Naive thymus-derived CD4-positive, alpha-beta T cell (primary cell): ENCODE measurements at regions of chr12 and their contacts with region 1.

Region 1: DNA sequence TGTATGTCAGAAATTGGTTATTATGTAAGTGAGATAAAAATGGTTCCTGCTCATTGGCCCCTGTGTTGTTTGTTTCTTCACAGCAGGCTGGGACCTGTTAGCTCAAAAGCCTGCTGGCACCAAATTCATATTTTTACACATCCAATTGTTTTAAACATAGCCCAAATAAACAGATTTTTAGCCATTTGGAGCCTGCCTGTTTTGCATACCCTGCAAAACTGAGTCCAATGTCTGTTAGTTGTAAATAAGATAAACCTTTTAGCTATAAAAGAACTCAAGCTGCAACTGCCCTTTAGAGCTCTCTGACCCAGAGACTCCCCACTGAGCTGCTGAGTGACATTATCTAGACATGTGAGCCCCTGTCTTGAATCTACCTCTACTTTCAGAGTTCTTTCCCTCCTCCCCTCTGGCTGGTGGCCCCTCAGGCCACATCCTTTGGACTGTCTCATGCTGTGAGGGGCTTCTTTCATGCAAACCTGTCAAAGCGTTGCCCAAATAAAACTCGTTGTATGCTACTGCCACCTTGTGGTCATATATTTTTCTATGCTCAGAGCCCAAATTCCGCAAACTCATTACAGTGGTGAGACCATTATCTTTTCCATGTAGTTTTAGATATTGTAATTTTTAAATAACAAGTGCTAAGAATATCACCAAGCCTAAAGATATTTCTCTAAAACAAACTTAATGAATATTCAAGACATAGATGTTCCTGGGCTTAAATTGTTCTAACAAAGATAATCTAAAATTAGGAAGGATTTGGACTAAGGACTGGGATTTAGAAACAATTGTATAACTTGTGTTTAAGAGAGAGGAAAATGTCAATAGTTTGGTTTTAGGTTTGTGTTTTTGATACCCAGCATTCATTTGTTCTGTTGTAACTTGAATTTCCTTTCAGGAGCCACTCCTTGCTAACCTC is 337.9 kb downstream of the AACS start:
- DNase-seq: peak in 2 of 9 donors; percentile 2 to 10
- ATAC-seq: no peak
- H3K4me3 ChIP-seq: no peak overlapping the region
- H3K4me3 Mint-ChIP-seq: no peak overlapping the region
- H3K27ac ChIP-seq: no peak overlapping the region
- H3K27ac Mint-ChIP-seq: no peak overlapping the region
- H3K4me1 ChIP-seq: no peaks in the 10 kb centered on the region
- H3K4me1 Mint-ChIP-seq: peaks cover 0 to 7% (median 0%) of the 10 kb centered on the region in 7 donors
- H3K27me3 ChIP-seq: no peaks in the 10 kb centered on the region
- H3K27me3 Mint-ChIP-seq: peaks cover 3 to 42% (median 23%) of the 10 kb centered on the region in 5 donors

Region 2: GRCh38 chr12:125049093-125049458 is 354.1 kb before region 1 on chr12:
- CTCF ChIA-PET with region 1: no interaction called
- POLR2A ChIA-PET with region 1: no interaction called
- intact Hi-C with region 1: no loop called
- DNase-seq: no peak
- ATAC-seq: no peak
- H3K4me3 ChIP-seq: peak overlapping the region; percentile 94
- H3K4me3 Mint-ChIP-seq: peak overlapping the region; percentile 78 to 97 (median 92)
- H3K27ac ChIP-seq: peak overlapping the region; percentile 71
- H3K27ac Mint-ChIP-seq: peak overlapping the region; percentile 42 to 95 (median 92)
- H3K4me1 ChIP-seq: peaks cover 0 to 5% of the 10 kb centered on the region in 2 donors
- H3K4me1 Mint-ChIP-seq: peaks cover 0 to 11% (median 7%) of the 10 kb centered on the region in 7 donors
- H3K27me3 ChIP-seq: no peaks in the 10 kb centered on the region
- H3K27me3 Mint-ChIP-seq: no peaks in the 10 kb centered on the region

Region 3: DNA sequence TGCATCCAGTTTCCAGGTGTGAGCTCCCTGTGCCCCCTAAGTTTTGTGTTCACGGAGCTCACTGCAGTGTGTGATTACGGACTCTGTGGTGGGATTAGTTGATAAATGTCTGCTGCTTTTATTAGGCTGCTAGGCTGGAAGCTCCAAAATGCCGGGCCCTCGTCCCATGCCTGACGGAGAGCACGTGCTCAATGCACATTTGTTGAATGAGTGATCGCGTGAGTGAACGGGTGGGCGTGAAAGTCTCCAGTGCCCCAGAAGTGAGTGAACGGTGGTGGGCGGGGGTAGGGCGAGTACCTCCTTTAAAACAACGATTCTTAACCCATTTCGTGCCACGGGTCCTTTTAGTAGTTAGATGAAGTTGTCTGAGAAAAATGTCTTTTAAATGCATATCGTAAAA is 162.4 kb before region 1 on chr12:
- CTCF ChIA-PET with region 1: no interaction called
- POLR2A ChIA-PET with region 1: no interaction called
- intact Hi-C with region 1: loop called in 1 of 2 experiments (anchors 2 kb)
- DNase-seq: no peak
- ATAC-seq: no peak
- H3K4me3 ChIP-seq: no peak overlapping the region
- H3K4me3 Mint-ChIP-seq: no peak overlapping the region
- H3K27ac ChIP-seq: no peak overlapping the region
- H3K27ac Mint-ChIP-seq: no peak overlapping the region
- H3K4me1 ChIP-seq: no peaks in the 10 kb centered on the region
- H3K4me1 Mint-ChIP-seq: no peaks in the 10 kb centered on the region
- H3K27me3 ChIP-seq: no peaks in the 10 kb centered on the region
- H3K27me3 Mint-ChIP-seq: peaks cover 0 to 55% (median 24%) of the 10 kb centered on the region in 5 donors

Region 4: DNA sequence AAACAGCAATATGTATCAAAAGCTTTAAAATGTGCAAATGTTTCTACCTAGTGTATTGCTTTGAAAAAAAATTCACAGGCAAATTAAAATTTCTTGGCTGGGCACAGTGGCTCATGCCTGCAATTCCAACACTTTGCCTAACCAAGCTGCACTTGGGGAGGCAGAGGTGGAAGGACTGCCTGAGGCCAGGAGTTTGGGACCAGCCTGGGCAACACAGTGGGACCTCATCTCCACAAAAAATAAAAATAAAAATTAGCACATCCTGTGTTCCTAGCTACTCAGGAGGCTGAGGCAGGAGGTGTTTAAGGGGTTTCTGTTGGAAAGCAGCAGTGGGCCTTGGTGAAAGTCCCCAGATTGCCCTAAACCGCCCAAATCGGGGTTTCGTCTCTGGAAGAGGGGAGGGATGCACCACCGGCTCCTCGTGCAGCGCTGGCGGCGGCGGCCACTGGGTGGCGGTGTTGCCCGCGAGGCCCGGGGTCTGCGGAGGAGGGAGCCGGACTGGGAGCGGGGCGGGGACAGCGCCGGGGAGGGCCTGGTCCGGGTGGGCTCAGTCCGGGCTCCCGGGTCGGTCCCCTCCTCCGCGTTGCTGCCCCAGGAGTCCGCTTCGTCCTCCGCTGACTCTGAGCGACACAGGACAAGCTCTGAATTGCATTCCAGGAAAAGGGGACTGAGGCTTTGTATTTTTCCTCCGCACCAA is 72.3 kb before region 1 on chr12:
- CTCF ChIA-PET with region 1: no interaction called
- POLR2A ChIA-PET with region 1: no interaction called
- intact Hi-C with region 1: loop called in 1 of 2 experiments (anchors 1 kb)
- DNase-seq: peak in 6 of 9 donors; percentile 5 to 72 (median 15)
- ATAC-seq: peak; percentile 51
- H3K4me3 ChIP-seq: no peak overlapping the region
- H3K4me3 Mint-ChIP-seq: peak overlapping the region in 1 of 10 donors; percentile 6
- H3K27ac ChIP-seq: no peak overlapping the region
- H3K27ac Mint-ChIP-seq: no peak overlapping the region
- H3K4me1 ChIP-seq: no peaks in the 10 kb centered on the region
- H3K4me1 Mint-ChIP-seq: no peaks in the 10 kb centered on the region
- H3K27me3 ChIP-seq: peaks cover 0 to 4% of the 10 kb centered on the region in 2 donors
- H3K27me3 Mint-ChIP-seq: peaks cover 13 to 60% (median 53%) of the 10 kb centered on the region in 5 donors

Region 5: DNA sequence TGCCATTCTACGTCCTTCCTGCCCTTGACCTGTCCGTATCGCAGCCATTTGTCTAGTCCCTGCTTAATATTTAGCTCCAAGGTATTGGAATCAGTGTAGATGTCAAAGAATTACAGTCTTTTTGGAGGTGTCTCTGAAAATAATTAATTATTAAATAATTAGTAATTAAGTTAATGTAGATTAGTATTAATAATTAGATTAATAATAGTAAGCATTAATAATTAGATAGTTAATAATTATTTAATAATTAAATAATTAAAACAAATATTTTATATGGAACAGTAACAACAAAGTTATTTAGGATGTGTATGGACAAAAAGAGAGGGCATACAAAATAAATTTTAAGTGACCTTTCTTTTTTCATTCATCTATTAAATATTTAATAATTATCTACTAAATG is 301.7 kb after region 1 on chr12:
- CTCF ChIA-PET with region 1: no interaction called
- POLR2A ChIA-PET with region 1: no interaction called
- intact Hi-C with region 1: no loop called
- DNase-seq: no peak
- ATAC-seq: no peak
- H3K4me3 ChIP-seq: no peak overlapping the region
- H3K4me3 Mint-ChIP-seq: no peak overlapping the region
- H3K27ac ChIP-seq: no peak overlapping the region
- H3K27ac Mint-ChIP-seq: no peak overlapping the region
- H3K4me1 ChIP-seq: no peaks in the 10 kb centered on the region
- H3K4me1 Mint-ChIP-seq: no peaks in the 10 kb centered on the region
- H3K27me3 ChIP-seq: no peaks in the 10 kb centered on the region
- H3K27me3 Mint-ChIP-seq: peaks cover 0 to 7% (median 0%) of the 10 kb centered on the region in 5 donors